ENCODE measurements at regions of chr5 and their contacts with region 1.

Region 1: GRCh38 chr5:68303038-68303738 is 87.6 kb downstream of the PIK3R1 start:
- DNase-seq: no peak
- H3K4me3 Mint-ChIP-seq: no peak overlapping the region
- H3K27ac Mint-ChIP-seq: peak overlapping the region; percentile 74
- H3K4me1 Mint-ChIP-seq: peaks cover 55% of the 10 kb centered on the region
- H3K27me3 Mint-ChIP-seq: peaks cover 4% of the 10 kb centered on the region

Region 2: DNA sequence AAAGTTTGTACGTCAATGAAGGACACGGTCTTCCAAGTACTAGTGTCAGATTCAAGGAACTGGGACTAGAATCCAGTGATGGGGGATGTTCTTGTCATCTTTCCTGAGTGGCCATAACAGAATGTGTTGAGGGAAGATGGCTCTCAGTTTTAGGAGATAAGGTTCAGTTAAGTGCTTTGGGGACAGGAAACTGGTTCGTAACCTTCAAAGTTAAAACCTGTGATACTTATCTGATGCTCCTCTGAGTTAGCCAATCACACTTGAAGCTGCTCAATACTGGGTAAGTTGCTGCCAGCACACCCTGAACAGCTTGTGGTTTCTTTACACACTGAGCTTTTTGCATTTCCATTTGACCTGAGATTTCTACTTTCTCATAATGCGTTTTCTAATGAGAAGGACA is 23.2 kb before region 1 on chr5:
- intact Hi-C with region 1: loop called (anchors 1 kb)
- DNase-seq: peak; percentile 61
- H3K4me3 Mint-ChIP-seq: peak overlapping the region; percentile 83
- H3K27ac Mint-ChIP-seq: peak overlapping the region; percentile 87
- H3K4me1 Mint-ChIP-seq: peaks cover 81% of the 10 kb centered on the region
- H3K27me3 Mint-ChIP-seq: no peaks in the 10 kb centered on the region

Region 3: DNA sequence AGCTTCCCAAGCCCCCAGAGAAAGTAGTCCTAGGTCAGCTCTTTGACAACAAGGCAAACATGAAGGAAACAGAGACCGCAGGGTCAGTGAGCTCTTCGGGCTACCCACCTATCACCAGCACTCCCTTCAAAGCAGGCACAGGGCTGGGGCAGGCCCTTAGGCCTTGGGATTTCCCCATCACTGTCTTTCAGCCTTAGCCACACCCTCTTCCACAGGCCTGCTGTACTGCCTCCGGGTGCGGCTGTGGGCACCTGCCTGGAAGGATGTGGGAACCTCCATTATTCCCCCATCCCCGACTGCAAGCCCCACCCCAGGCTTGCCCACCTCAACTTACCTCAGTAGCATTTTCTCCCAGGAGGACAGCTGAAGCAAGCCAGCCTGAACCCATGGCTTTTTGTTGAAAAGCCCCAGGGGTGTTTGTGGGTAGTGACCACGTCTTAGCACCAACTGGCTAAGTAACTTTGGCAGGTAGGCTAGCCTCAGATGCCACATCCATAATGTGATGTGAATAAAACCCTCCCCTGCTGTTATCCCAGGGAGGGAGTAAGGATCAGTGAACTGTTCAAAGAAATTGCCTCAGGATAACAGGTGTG is 12.6 kb after region 1 on chr5:
- intact Hi-C with region 1: loop called (anchors 1 kb)
- DNase-seq: peak; percentile 13
- H3K4me3 Mint-ChIP-seq: no peak overlapping the region
- H3K27ac Mint-ChIP-seq: peak overlapping the region; percentile 11
- H3K4me1 Mint-ChIP-seq: peaks cover 26% of the 10 kb centered on the region
- H3K27me3 Mint-ChIP-seq: peaks cover 16% of the 10 kb centered on the region

Region 4: GRCh38 chr5:68415177-68416085 is 112.2 kb after region 1 on chr5:
- intact Hi-C with region 1: no loop called
- DNase-seq: no peak
- H3K4me3 Mint-ChIP-seq: no peak overlapping the region
- H3K27ac Mint-ChIP-seq: no peak overlapping the region
- H3K4me1 Mint-ChIP-seq: peaks cover 20% of the 10 kb centered on the region
- H3K27me3 Mint-ChIP-seq: peaks cover 19% of the 10 kb centered on the region